Activated T-helper 2 cell treated with anti-CD3 and anti-CD28 coated beads, Interferon-gamma antibody, Interleukin-2, Interleukin-4, amounts not matched to agents 10 μg/mL and 5 μg/mL and 100 μg/mL, durations not matched to agents 14 hours and 24 hours and 36 hours (primary cell): ENCODE measurements at regions of chr9 and their contacts with region 1.

Region 1: DNA sequence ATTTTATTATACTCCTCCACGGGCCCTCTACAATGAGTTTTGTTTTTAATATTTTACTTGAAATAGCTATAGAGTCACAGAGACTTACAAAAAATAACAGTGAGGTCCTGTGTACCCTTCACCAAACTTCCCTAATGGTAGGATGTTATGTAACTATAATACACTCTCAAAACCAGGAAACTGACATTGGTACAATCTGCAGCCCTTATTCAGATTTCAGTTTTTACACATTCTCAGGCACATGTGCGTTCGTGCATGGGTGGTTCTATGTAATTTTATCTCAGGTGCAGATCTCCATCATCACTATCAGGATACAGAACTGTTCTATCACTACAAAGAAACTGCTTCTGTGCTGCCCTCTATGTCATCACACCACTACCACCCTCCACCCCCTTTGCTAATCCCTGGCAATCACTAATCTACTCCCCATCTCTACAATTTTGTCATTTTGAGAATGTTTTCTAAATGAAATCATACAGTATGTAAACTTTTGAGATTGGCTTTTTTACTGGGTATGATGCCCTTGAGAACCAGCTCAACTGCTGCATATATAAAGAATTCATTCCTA is 16.4 kb downstream of the RAB14 start:
- DNase-seq: no peak
- H3K4me3 Mint-ChIP-seq: no peak overlapping the region
- H3K27ac Mint-ChIP-seq: peak overlapping the region; percentile 72
- H3K4me1 Mint-ChIP-seq: peaks cover 51% of the 10 kb centered on the region
- H3K27me3 Mint-ChIP-seq: no peaks in the 10 kb centered on the region

Region 2: DNA sequence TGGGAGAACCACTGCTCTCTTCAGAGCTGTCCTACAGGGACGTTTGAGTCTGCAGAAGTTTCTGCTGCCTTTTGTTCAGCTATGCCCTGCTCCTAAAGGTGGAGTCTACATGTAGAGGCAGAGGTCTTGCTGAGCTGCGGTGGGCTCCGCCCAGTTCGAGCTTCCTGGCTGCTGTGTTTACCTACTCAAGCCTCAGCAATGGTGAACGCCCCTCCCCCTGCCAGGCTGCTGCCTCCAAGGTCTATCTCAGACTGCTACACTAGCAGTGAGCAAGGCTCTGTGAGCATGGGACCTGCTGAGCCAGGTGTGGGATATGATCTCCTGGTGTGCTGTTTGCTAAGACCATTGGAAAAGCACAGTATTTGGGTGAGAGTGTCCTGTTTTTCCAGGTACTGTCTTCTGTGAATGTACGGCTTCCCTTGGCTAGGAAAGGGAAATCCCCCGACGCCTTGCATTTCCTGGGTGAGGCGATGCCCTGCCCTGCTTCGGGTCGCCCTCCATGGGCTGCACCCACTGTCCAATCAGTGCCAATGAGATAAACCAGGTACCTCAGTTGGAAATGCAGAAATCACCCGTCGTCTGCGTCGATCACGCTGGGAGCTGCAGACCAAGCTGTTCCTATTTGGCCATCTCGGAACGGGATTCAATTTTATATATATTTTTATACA is 52.0 kb before region 1 on chr9:
- intact Hi-C with region 1: loop called (anchors 10 kb)
- DNase-seq: peak; percentile 76
- H3K4me3 Mint-ChIP-seq: peak overlapping the region; percentile 4
- H3K27ac Mint-ChIP-seq: no peak overlapping the region
- H3K4me1 Mint-ChIP-seq: peaks cover 58% of the 10 kb centered on the region
- H3K27me3 Mint-ChIP-seq: no peaks in the 10 kb centered on the region

Region 3: DNA sequence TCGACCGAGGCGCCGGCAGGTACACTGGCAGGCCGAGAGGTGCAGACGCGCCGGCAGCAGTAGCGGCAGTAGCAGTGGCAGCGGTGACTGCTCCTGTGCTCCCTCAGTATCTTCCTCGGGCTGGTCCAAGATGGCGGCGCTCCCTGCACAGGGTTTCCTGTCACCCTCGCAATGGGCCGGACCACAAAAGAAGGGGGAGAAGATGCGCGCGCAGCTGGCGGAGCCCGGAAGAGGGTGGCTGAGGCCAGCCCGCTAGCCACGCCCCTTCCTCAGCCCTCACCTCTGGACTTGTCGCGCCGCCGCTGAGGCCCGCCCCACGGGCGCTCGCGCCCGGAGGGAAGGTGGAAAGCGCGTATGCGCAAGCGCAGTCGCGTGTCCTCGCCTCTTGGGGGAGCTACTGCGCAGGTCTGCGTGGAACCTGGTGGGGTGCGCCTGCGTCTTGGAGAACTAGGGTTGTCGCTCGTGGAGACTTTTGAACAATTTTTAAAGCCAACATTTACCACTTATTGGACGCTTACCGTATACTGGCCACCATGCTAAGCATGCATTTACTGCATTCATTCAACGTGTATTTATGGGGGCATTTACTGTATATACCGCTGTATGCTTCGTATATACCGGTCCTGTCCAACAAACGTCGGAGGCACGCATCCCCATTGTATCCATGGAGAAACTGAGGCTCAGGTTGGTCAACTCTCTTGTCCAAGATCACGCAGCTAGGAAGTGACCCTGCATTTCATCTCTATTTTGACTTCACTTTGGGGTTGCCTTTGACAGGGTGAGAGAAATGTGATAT is 16.7 kb after region 1 on chr9 and contains the start of gene RAB14:
- intact Hi-C with region 1: loop called (anchors 2 kb)
- DNase-seq: peak; percentile 100
- H3K4me3 Mint-ChIP-seq: peak within 1 kb of the TSS; percentile 96
- H3K27ac Mint-ChIP-seq: peak within 1 kb of the TSS; percentile 87
- H3K4me1 Mint-ChIP-seq: peaks cover 46% of the 10 kb centered on the region
- H3K27me3 Mint-ChIP-seq: no peaks in the 10 kb centered on the region
- total RNA-seq, gene RAB14: 62.0 and 63.2 TPM in 2 replicates